Activated CD4-positive, alpha-beta memory T cell treated with anti-CD3 and anti-CD28 coated beads for 36 hours (primary cell): ENCODE measurements at regions of chr20 and their contacts with region 1.

Region 1: GRCh38 chr20:56343861-56344381 is 14.9 kb upstream of the FAM210B start:
- DNase-seq: peak; percentile 63
- H3K4me3 Mint-ChIP-seq: no peak overlapping the region
- H3K27ac Mint-ChIP-seq: no peak overlapping the region
- H3K4me1 Mint-ChIP-seq: peaks cover 8% of the 10 kb centered on the region
- H3K27me3 Mint-ChIP-seq: peaks cover 48% of the 10 kb centered on the region

Region 2: GRCh38 chr20:54668271-54669039 is 1675.5 kb before region 1 on chr20:
- CTCF ChIA-PET with region 1: no interaction called
- POLR2A ChIA-PET with region 1: no interaction called
- intact Hi-C with region 1: loop called (anchors 10 kb)
- DNase-seq: peak; percentile 42
- H3K4me3 Mint-ChIP-seq: no peak overlapping the region
- H3K27ac Mint-ChIP-seq: no peak overlapping the region
- H3K4me1 Mint-ChIP-seq: peaks cover 5% of the 10 kb centered on the region
- H3K27me3 Mint-ChIP-seq: peaks cover 15% of the 10 kb centered on the region

Region 3: DNA sequence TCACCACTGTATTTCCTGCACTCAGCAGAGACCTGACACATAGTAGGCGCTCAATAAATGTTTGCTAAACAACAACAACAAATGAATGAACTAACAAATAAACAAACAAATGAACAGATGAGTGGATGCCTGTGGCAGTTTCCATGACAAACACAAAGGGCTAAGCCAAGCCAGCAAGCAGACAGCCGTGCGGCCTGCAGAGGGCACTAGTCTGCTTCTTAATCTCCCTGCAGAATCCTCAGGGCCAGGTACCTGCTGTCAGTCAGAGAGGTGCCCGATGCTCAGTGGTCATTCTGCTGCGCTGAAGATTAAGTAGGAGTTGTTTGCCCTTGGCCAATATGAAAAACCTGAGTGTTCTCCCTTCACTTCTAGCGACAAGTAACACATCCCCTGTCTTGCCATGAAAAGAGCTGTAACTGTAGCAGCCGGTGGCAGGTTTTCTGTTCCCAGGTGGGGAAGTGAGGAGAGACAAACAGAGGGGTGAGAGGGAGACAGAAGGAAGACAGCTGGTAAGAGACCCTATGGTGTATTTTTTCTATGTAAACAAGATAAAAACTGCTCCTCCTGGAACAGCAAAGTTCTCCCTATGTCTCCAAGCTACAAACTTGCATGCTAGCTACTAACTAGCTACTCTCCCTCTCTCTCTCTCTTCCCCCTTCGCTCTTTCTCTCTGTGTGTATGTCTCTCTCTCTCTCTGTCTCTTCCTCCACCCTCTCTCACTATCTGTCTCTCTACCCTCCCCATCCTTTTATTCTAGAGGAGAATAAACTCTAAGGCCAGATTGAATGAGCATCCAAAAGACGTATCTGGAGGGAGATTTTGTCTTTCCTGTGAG is 95.8 kb before region 1 on chr20 and contains the start of gene MC3R:
- CTCF ChIA-PET with region 1: interaction called, 26 read pairs
- POLR2A ChIA-PET with region 1: no interaction called
- intact Hi-C with region 1: loop called (anchors 1 kb)
- DNase-seq: peak; percentile 57
- H3K4me3 Mint-ChIP-seq: no peak within 1 kb of the TSS
- H3K27ac Mint-ChIP-seq: no peak within 1 kb of the TSS
- H3K4me1 Mint-ChIP-seq: no peaks in the 10 kb centered on the region
- H3K27me3 Mint-ChIP-seq: peaks cover 34% of the 10 kb centered on the region
- total RNA-seq, gene MC3R: not detected

Region 4: DNA sequence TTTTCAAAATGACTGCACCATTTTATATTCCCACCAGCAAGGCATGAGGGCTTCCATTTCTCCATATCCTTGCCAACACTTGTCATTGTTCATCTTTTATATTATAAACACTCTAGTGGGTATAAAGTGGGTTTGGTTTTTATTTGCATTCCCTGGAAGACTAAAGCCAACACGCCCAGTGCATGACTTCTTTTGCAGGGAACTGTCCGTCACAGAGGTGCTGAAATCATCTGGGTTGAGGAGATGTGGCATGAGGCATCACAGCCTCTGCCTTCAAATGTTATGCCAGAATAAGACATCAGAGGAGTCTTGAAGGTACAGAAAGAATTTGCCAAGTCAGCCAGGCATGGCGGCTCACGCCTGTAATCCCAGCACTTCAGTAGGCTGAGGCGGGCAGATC is 15.1 kb before region 1 on chr20:
- CTCF ChIA-PET with region 1: no interaction called
- POLR2A ChIA-PET with region 1: no interaction called
- intact Hi-C with region 1: no loop called
- DNase-seq: no peak
- H3K4me3 Mint-ChIP-seq: no peak overlapping the region
- H3K27ac Mint-ChIP-seq: no peak overlapping the region
- H3K4me1 Mint-ChIP-seq: no peaks in the 10 kb centered on the region
- H3K27me3 Mint-ChIP-seq: peaks cover 21% of the 10 kb centered on the region

Region 5: GRCh38 chr20:56373940-56374339 is 30.0 kb after region 1 on chr20:
- CTCF ChIA-PET with region 1: no interaction called
- POLR2A ChIA-PET with region 1: no interaction called
- intact Hi-C with region 1: no loop called
- DNase-seq: peak; percentile 32
- H3K4me3 Mint-ChIP-seq: no peak overlapping the region
- H3K27ac Mint-ChIP-seq: no peak overlapping the region
- H3K4me1 Mint-ChIP-seq: peaks cover 23% of the 10 kb centered on the region
- H3K27me3 Mint-ChIP-seq: no peaks in the 10 kb centered on the region